ENCODE measurements at regions of chr16 and their contacts with region 1.

Region 1: GRCh38 chr16:47713225-47713595 is 252.1 kb downstream of the PHKB start:
- DNase-seq: peak; percentile 60
- H3K4me3 Mint-ChIP-seq: no peak overlapping the region
- H3K27ac Mint-ChIP-seq: no peak overlapping the region
- H3K4me1 Mint-ChIP-seq: peaks cover 6% of the 10 kb centered on the region
- H3K27me3 Mint-ChIP-seq: peaks cover 5% of the 10 kb centered on the region

Region 2: GRCh38 chr16:47732523-47733111 is 19.4 kb after region 1 on chr16:
- CTCF ChIA-PET with region 1: interaction called, 3 read pairs
- POLR2A ChIA-PET with region 1: no interaction called
- intact Hi-C with region 1: loop called (anchors 1 kb)
- DNase-seq: peak; percentile 54
- H3K4me3 Mint-ChIP-seq: no peak overlapping the region
- H3K27ac Mint-ChIP-seq: peak overlapping the region; percentile 30
- H3K4me1 Mint-ChIP-seq: peaks cover 6% of the 10 kb centered on the region
- H3K27me3 Mint-ChIP-seq: peaks cover 10% of the 10 kb centered on the region

Region 3: GRCh38 chr16:47779201-47780016 is 66.2 kb after region 1 on chr16:
- CTCF ChIA-PET with region 1: no interaction called
- POLR2A ChIA-PET with region 1: no interaction called
- intact Hi-C with region 1: no loop called
- DNase-seq: peak; percentile 61
- H3K4me3 Mint-ChIP-seq: peak overlapping the region; percentile 68
- H3K27ac Mint-ChIP-seq: peak overlapping the region; percentile 64
- H3K4me1 Mint-ChIP-seq: peaks cover 15% of the 10 kb centered on the region
- H3K27me3 Mint-ChIP-seq: no peaks in the 10 kb centered on the region